AG04449 (cell line): ENCODE measurements at regions of chr15 and their contacts with region 1.

Region 1: GRCh38 chr15:50003786-50004334 is 115.2 kb downstream of the ATP8B4 start:
- DNase-seq: peak; percentile 29
- H3K4me3 ChIP-seq: no peak overlapping the region
- CTCF ChIP-seq: peak; percentile 88

Region 2: DNA sequence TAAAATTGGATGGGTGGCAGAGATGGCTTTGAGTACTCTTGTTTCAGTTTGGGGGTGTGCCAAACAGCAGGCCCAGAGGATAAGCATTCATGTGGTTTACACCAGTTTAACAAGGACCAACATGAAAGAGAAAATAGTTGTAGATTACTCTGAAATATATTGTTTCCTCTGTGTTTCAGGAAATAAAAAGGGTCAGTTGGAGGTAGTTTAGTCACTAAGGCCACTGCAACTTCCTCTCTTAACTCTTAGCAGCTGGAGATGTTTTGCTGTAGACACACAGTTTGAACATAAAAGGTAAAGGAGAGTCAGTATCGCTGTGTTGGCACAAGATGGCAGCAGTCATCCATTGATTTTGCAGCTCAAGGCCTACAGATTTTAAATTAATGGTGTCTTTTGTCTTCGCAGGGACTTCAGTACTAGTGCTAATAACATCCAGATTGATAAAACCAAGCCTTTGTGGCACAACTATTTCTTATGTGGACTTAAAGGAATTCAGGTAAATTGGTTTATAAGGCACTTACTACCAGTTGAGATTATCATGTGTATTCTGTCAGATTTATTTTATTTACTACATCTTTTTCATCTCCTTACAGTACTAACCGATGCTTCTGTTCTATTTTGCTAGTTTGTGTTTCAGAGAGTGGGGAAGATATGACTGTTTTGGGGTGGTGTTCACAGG is 768.3 kb before region 1 on chr15:
- CTCF ChIA-PET with region 1: interaction called, 73 read pairs
- POLR2A ChIA-PET with region 1: no interaction called
- DNase-seq: peak; percentile 59
- H3K4me3 ChIP-seq: no peak overlapping the region
- CTCF ChIP-seq: peak; percentile 66

Region 3: GRCh38 chr15:49774689-49775088 is 229.2 kb before region 1 on chr15:
- CTCF ChIA-PET with region 1: no interaction called
- POLR2A ChIA-PET with region 1: no interaction called
- DNase-seq: no peak
- H3K4me3 ChIP-seq: no peak overlapping the region
- CTCF ChIP-seq: no peak

Region 4: GRCh38 chr15:49901996-49902684 is 101.7 kb before region 1 on chr15:
- CTCF ChIA-PET with region 1: interaction called, 22 read pairs
- POLR2A ChIA-PET with region 1: no interaction called
- DNase-seq: no peak
- H3K4me3 ChIP-seq: no peak overlapping the region
- CTCF ChIP-seq: peak; percentile 37

Region 5: GRCh38 chr15:49984414-49984813 is 19.4 kb before region 1 on chr15:
- CTCF ChIA-PET with region 1: interaction called, 16 read pairs
- POLR2A ChIA-PET with region 1: no interaction called
- DNase-seq: no peak
- H3K4me3 ChIP-seq: no peak overlapping the region
- CTCF ChIP-seq: no peak

Region 6: GRCh38 chr15:50017522-50017921 is 13.7 kb after region 1 on chr15:
- CTCF ChIA-PET with region 1: interaction called, 14 read pairs
- POLR2A ChIA-PET with region 1: no interaction called
- DNase-seq: no peak
- H3K4me3 ChIP-seq: no peak overlapping the region
- CTCF ChIP-seq: no peak

Region 7: GRCh38 chr15:51038166-51038963 is 1034.5 kb after region 1 on chr15:
- CTCF ChIA-PET with region 1: no interaction called
- POLR2A ChIA-PET with region 1: no interaction called
- DNase-seq: no peak
- H3K4me3 ChIP-seq: no peak overlapping the region
- CTCF ChIP-seq: no peak